ENCODE measurements at regions of chr3 and their contacts with region 1.

Region 1: GRCh38 chr3:101195951-101196713 is 124.2 kb downstream of the IMPG2 start:
- DNase-seq: no peak
- H3K4me3 ChIP-seq: no peak overlapping the region
- H3K27me3 ChIP-seq: no peaks in the 10 kb centered on the region
- CTCF ChIP-seq: peak; percentile 69

Region 2: DNA sequence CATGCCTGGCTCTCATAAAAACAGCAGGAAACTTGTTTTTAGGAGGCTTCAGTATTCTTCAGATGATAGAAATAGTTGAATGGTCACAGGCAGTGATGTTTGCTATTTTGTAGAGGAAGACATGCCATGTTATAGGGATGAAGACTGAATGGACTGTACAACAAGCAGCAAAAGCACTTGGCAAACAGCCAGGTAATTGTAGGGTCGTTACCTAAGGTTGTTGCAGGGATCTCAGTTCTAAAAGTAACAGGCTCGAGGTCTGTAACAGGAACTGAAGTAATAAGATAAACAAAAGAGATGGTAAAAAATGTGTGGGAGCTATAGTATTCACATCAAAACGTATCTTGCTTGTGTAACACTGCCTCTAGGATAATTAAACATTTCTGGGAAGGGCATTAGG is 370.6 kb before region 1 on chr3:
- CTCF ChIA-PET with region 1: interaction called, 11 read pairs
- POLR2A ChIA-PET with region 1: no interaction called
- DNase-seq: no peak
- H3K4me3 ChIP-seq: no peak overlapping the region
- H3K27me3 ChIP-seq: 0 out of 2 replicates have a peak, but pooled peaks cover 2% of the 10 kb centered on the region
- CTCF ChIP-seq: no peak

Region 3: DNA sequence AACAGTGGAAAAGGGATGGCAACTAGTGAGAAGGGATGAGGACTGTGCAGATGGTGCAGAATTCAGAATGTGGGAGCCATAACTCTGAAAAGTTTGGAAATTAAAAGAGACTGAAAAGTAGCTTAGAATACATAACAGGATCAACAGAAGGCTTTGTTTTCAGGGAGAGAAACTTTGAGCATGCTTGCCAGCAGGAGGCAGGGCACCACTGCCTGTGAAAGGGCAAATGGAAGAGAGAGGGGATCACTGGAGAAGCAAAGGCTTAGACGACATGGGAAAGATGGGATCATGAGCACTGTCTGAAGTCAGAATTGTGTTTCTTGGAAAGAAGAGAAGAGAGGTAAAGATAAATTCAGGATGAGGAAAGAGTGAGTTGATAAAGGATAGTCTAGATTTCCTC is 302.5 kb before region 1 on chr3:
- CTCF ChIA-PET with region 1: interaction called, 77 read pairs
- POLR2A ChIA-PET with region 1: no interaction called
- DNase-seq: no peak
- H3K4me3 ChIP-seq: no peak overlapping the region
- H3K27me3 ChIP-seq: no peaks in the 10 kb centered on the region
- CTCF ChIP-seq: peak; percentile 73

Measured in BJ (cell line).